Ovary (tissue), 10 donors: ENCODE measurements at regions of chr16 and their contacts with region 1.

Region 1: DNA sequence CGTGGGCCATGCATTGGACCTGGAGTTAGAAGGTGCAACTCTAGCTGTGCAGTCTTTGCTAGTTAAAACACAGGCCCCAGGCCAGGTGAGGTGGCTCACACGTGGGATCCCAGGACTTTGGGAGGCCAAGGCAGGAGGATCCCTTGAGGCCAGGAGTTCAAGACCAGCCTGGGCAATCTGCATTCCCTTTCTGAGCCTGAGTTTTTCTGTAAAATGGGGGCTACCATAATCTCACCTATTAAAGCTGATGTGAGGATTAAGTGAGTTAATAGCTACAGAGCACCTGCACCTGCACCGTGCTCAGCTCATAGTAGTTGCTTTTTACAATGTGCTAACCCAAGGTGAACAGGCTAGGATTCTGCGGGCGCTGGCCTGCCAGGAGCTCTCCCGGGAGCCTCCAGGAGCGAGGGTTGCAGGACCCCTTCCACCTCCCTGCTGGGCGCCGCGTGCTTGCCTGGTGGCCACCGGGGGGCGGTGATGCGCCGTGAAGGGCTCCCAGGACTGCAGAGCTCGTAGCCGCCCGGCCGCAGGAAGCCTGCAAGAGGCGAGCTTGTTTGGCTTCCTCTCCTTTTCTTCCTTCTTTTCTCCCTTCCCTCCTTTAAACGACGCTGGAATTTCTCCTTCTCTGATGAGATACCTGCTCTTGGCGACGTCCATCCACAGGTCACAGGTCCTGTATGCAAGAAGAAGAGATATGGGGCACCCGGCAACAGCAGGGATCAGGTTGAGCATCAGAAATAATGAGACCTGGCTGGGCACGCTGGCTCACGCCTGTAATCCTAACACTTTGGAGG is 51.3 kb downstream of the ZFP90 start:
- DNase-seq: peak; percentile 79 to 89 (median 85)
- H3K4me3 ChIP-seq: no peak overlapping the region
- H3K27ac ChIP-seq: no peak overlapping the region
- H3K4me1 ChIP-seq: no peaks in the 10 kb centered on the region
- H3K27me3 ChIP-seq: no peaks in the 10 kb centered on the region
- CTCF ChIP-seq: peak; percentile 81 to 87 (median 87)
- EP300 ChIP-seq: no peak
- POLR2A ChIP-seq: no peak

Region 2: DNA sequence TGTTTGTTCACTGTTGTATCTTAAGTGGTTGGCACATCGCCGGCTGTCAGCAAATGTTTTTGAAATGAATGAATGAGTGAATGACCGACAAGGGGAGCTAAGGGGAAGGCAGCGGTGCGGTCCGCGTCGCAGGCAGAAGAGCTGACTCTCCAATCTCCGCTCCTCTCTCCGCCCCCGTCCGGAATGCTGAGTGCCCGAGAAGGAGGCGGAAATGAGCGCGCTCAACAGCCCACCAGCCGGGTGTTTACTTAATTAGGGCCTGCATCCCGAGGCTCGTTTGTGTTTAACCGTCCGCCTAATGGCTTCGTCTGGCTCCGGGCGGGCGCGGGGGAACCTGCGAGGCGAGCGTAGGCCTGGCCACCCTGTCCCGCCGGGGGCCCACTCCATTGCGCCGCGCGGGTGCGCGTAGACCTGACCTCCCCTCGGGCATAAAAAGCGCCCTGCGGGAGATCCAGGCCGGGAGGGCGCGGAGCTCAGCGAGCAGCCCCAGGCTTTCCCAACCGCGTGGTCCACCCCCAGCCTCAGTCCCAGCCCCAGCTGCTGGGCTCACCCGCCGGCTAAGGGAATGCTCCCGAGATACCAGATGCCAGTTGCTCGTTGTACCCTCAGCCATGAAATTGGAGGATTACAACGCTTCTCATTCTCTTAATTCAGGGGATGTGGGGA is 52.2 kb after region 1 on chr16:
- intact Hi-C with region 1: no loop called
- DNase-seq: peak; percentile 62 to 81 (median 73)
- H3K4me3 ChIP-seq: peak overlapping the region; percentile 33
- H3K27ac ChIP-seq: peak overlapping the region; percentile 88 to 89
- H3K4me1 ChIP-seq: peaks cover 12% of the 10 kb centered on the region
- H3K27me3 ChIP-seq: no peaks in the 10 kb centered on the region
- CTCF ChIP-seq: no peak
- EP300 ChIP-seq: no peak
- POLR2A ChIP-seq: no peak

Region 3: DNA sequence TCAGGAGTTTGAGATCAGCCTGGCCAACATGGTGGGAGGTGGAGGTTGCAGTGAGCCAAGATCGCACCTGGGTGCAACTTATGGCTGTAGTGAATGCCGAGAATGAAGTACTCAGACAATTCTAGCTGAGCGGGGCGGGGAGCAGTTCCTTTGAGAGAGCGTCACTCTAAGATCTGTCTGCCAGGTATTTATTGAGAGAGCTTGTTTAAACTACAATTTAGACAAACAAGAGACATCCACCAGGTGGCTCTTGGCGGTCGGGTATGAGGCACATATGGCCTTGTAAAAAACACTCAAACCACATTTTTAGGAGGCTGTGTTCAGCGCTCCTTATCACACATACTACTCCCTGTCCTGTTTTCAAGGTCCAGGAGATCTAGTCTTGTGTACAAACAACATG is 106.1 kb after region 1 on chr16:
- intact Hi-C with region 1: loop called in 1 of 4 experiments (anchors 10 kb)
- DNase-seq: no peak
- H3K4me3 ChIP-seq: no peak overlapping the region
- H3K27ac ChIP-seq: no peak overlapping the region
- H3K4me1 ChIP-seq: no peaks in the 10 kb centered on the region
- H3K27me3 ChIP-seq: no peaks in the 10 kb centered on the region
- CTCF ChIP-seq: no peak
- EP300 ChIP-seq: no peak
- POLR2A ChIP-seq: no peak

Region 4: GRCh38 chr16:68798443-68798842 is 208.0 kb after region 1 on chr16:
- intact Hi-C with region 1: loop called in 1 of 4 experiments (anchors 5 kb)
- DNase-seq: no peak
- H3K4me3 ChIP-seq: no peak overlapping the region
- H3K27ac ChIP-seq: no peak overlapping the region
- H3K4me1 ChIP-seq: no peaks in the 10 kb centered on the region
- H3K27me3 ChIP-seq: no peaks in the 10 kb centered on the region
- CTCF ChIP-seq: no peak
- EP300 ChIP-seq: no peak
- POLR2A ChIP-seq: no peak

Region 5: DNA sequence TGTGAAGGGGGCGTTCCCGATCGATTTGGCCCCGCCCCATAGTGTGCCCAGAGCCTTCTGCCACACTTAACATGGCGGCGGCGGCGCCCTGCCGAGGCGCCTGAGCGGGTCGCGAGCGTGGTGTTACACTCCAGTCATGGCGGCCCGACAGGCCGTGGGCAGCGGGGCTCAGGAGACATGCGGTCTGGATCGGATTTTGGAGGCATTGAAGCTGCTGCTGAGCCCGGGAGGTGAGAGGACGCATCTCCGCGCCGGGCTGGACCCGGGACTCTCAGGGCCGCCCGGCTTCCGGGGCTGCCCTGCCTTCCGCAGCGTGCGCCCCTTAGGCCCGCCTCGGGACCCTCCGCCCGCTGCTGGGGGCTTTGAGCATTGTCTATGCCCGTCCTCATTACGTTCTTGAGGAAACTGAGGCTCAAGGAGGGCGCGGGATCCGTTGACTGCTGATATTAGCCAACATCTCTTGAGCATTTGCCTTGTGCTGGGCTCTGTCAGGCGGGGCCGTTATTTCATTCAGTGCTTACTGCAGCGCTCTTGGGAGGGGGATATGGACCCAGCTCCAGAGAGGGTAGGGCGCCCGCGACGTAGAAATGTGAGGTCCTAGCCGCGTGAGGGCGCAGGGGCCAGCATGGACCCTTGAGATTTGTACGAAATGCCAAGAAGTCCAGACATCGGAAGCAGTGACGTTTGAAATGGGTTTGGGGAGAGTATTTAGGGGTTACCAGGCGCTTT is 253.2 kb after region 1 on chr16 and contains the start of gene TANGO6:
- intact Hi-C with region 1: loop called in 1 of 4 experiments (anchors 5 kb)
- DNase-seq: peak; percentile 81 to 92 (median 87)
- H3K4me3 ChIP-seq: peak within 1 kb of the TSS; percentile 77
- H3K27ac ChIP-seq: peak within 1 kb of the TSS; percentile 80 to 86
- H3K4me1 ChIP-seq: no peaks in the 10 kb centered on the region
- H3K27me3 ChIP-seq: no peaks in the 10 kb centered on the region
- CTCF ChIP-seq: no peak
- EP300 ChIP-seq: no peak
- POLR2A ChIP-seq: peak; percentile 15
- total RNA-seq, gene TANGO6: 9.4 to 27.8 (median 18.3) TPM